ENCODE measurements at regions of chr2 and their contacts with region 1.

Region 1: DNA sequence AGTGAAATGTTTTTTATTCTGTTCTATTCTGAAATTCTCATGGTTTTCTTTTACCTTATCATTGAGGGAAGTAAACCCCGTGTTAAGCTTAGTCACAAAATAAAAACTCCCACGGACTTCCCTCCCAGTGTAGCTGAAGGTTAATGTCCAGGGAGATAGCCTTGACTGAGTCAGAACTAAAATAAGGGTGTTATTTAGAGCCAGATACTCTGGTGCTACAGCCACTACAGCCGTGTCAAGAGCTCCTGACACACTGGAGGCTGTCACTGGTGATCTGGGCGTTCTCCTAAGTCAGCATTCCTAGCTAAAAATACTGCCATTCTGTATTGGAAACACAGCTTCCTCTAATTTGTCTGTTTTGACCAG is 82.0 kb upstream of the RANBP2 start:
- DNase-seq: no peak
- ATAC-seq: peak; percentile 90

Region 2: GRCh38 chr2:108533832-108534583 is 103.3 kb before region 1 on chr2 and contains the start of gene LIMS1:
- intact Hi-C with region 1: loop called (anchors 10 kb)
- DNase-seq: peak; percentile 96
- ATAC-seq: peak; percentile 97
- total RNA-seq, gene LIMS1: 84.3 TPM

Region 3: GRCh38 chr2:108607706-108608301 is 29.5 kb before region 1 on chr2:
- intact Hi-C with region 1: loop called (anchors 1 kb)
- DNase-seq: no peak
- ATAC-seq: peak; percentile 55

Measured in Right ventricle myocardium inferior (tissue), 1 donor.